Breast epithelium (tissue), 4 donors: ENCODE measurements at regions of chr15 and their contacts with region 1.

Region 1: GRCh38 chr15:25739687-25740121 is 123.4 kb downstream of the ATP10A start:
- DNase-seq: no peak
- H3K4me3 ChIP-seq: no peak overlapping the region
- H3K27ac ChIP-seq: no peak overlapping the region
- H3K4me1 ChIP-seq: no peaks in the 10 kb centered on the region
- H3K27me3 ChIP-seq: no peaks in the 10 kb centered on the region
- CTCF ChIP-seq: no peak
- POLR2A ChIP-seq: no peak

Region 2: DNA sequence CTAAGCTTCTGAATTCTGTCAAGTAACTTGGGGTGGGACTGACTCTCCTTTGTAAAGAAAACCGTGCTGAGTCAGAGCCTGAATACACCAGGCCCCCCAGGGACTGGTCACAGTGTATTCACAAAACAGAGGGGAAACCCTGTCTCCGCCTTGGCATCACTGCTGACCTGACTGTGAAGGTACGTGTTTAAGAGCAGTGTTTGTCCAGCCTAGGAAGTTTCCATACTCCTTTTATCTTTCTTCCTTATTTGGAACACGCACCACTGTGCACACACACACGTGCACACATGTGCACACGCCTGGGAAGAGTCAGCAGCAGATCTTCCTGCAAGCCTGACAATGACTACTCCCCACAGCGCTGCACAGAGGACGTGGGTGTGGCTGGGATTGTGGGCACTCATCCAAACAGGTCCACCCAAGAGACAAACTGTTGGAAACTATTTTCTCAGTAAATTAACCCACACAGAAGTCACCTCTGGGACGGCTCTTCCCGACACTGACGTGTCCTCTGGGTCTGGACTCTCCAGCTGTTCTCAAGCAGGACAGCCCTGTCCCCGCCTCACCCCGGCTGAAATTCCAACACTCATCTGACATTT is 35.7 kb after region 1 on chr15:
- intact Hi-C with region 1: loop called (anchors 5 kb)
- DNase-seq: no peak
- H3K4me3 ChIP-seq: no peak overlapping the region
- H3K27ac ChIP-seq: no peak overlapping the region
- H3K4me1 ChIP-seq: no peaks in the 10 kb centered on the region
- H3K27me3 ChIP-seq: no peaks in the 10 kb centered on the region
- CTCF ChIP-seq: no peak
- POLR2A ChIP-seq: no peak